WTC11 (cell line): ENCODE measurements at regions of chr2 and their contacts with region 1.

Region 1: DNA sequence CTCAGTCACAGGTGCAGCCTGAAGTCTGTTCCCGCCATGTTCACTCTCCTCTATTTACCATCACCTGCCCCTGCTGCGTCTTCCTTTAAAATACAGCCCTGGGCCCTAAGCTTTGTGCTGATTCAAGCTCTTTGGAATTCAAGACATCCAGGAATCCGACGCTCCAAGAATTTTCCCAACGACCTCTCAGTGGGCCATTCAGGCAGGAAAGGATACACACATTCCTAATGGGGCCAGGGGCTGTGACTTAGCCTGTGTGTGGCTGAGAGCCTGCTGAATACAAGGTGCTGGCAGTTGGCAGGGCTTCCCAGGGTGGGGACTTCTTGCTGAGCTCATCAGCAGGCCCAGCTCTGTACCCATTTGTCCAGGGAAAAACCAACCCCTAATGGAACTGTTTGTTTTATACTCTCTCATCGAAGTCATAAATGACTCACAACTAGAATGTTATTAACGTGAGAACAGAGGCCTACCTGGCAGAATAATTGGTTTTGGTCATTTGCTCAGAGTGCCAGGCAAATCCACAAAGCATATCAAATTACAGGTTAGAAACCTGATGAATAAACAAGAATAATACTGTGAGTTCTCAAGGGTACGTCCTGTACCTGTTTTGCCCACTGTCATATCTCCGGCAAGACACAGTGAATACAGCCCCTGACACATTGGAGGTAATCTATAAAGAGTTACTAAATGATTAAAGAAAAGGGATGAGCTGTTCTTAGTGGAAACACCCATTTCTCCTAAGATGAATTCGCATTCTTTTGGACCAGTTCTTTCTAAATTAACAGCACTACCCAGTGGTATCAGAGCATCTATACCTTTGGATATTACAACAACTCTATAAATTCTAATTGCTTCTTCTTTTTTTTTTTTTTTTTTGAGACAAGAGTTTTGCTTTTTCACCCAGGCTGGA is 12.6 kb upstream of the KCMF1 start:
- DNase-seq: peak; percentile 86
- ATAC-seq: peak; percentile 79
- H3K4me3 Mint-ChIP-seq: peak overlapping the region; percentile 70
- H3K27ac Mint-ChIP-seq: peak overlapping the region; percentile 100
- H3K4me1 Mint-ChIP-seq: peaks cover 73% of the 10 kb centered on the region
- H3K27me3 Mint-ChIP-seq: no peaks in the 10 kb centered on the region
- CTCF ChIP-seq: no peak

Region 2: GRCh38 chr2:84792856-84793522 is 165.4 kb before region 1 on chr2:
- CTCF ChIA-PET with region 1: no interaction called
- POLR2A ChIA-PET with region 1: no interaction called
- DNase-seq: no peak
- ATAC-seq: no peak
- H3K4me3 Mint-ChIP-seq: no peak overlapping the region
- H3K27ac Mint-ChIP-seq: no peak overlapping the region
- H3K4me1 Mint-ChIP-seq: no peaks in the 10 kb centered on the region
- H3K27me3 Mint-ChIP-seq: no peaks in the 10 kb centered on the region; the same call in 1 of the 2 replicates
- CTCF ChIP-seq: no peak

Region 3: GRCh38 chr2:84849271-84849952 is 109.0 kb before region 1 on chr2:
- CTCF ChIA-PET with region 1: no interaction called
- POLR2A ChIA-PET with region 1: no interaction called
- DNase-seq: no peak
- ATAC-seq: no peak
- H3K4me3 Mint-ChIP-seq: no peak overlapping the region
- H3K27ac Mint-ChIP-seq: no peak overlapping the region
- H3K4me1 Mint-ChIP-seq: no peaks in the 10 kb centered on the region
- H3K27me3 Mint-ChIP-seq: peaks cover 17% of the 10 kb centered on the region
- CTCF ChIP-seq: no peak

Region 4: GRCh38 chr2:84939426-84940087 is 18.8 kb before region 1 on chr2:
- CTCF ChIA-PET with region 1: interaction called, 4 read pairs
- POLR2A ChIA-PET with region 1: interaction called, 10 read pairs
- DNase-seq: no peak
- ATAC-seq: peak; percentile 37
- H3K4me3 Mint-ChIP-seq: no peak overlapping the region
- H3K27ac Mint-ChIP-seq: peak overlapping the region; percentile 86; the same call in 1 of the 2 replicates
- H3K4me1 Mint-ChIP-seq: peaks cover 26% of the 10 kb centered on the region
- H3K27me3 Mint-ChIP-seq: no peaks in the 10 kb centered on the region; the same call in 1 of the 2 replicates
- CTCF ChIP-seq: no peak

Region 5: GRCh38 chr2:84946204-84947009 is 12.0 kb before region 1 on chr2:
- CTCF ChIA-PET with region 1: interaction called, 13 read pairs
- POLR2A ChIA-PET with region 1: interaction called, 8 read pairs
- DNase-seq: no peak
- ATAC-seq: peak; percentile 57
- H3K4me3 Mint-ChIP-seq: no peak overlapping the region; the same call in 1 of the 2 replicates
- H3K27ac Mint-ChIP-seq: no peak overlapping the region
- H3K4me1 Mint-ChIP-seq: peaks cover 12% of the 10 kb centered on the region
- H3K27me3 Mint-ChIP-seq: no peaks in the 10 kb centered on the region; the same call in none of the 2 replicates
- CTCF ChIP-seq: no peak

Region 6: GRCh38 chr2:84970868-84971509 is 12.6 kb after region 1 on chr2 and contains the start of gene KCMF1:
- CTCF ChIA-PET with region 1: interaction called, 7 read pairs
- POLR2A ChIA-PET with region 1: interaction called, 90 read pairs
- DNase-seq: peak; percentile 74
- ATAC-seq: peak; percentile 66
- H3K4me3 Mint-ChIP-seq: peak within 1 kb of the TSS; percentile 99
- H3K27ac Mint-ChIP-seq: peak within 1 kb of the TSS; percentile 100
- H3K4me1 Mint-ChIP-seq: peaks cover 55% of the 10 kb centered on the region
- H3K27me3 Mint-ChIP-seq: no peaks in the 10 kb centered on the region
- CTCF ChIP-seq: no peak
- total RNA-seq, gene KCMF1: 114 to 118 TPM (median 117 TPM) in 3 replicates

Region 7: DNA sequence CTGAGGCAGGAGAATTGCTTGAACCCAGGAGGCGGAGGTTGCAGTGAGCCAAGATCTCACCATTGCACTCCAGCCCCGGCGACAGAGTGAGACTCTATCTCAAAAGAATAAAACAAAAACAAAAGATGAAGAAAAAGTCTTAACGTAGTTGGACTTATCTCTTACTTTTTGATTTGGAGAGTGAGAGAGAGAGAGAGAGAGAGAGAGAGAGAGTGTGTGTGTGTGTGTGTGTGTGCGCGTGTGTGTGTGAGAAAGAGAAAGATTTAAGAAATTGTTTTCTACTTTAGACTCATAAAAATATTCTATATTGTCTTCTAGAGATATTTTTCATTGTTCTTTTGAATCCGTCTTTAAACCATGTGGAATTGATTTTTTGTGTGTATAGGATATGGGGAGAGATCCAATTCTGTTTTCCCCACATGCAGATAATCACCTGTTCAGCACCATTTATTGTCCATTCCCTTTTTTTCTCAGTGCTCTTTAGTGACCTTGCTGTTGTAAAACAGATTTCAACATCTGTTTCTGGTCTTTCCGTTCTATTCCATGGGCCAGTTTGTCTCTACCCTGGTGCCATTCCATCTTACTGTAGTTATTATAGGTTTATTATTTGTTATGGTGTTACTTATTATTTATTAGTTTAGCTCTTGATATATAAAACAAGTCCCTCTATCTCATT is 66.1 kb after region 1 on chr2:
- CTCF ChIA-PET with region 1: no interaction called
- POLR2A ChIA-PET with region 1: no interaction called
- DNase-seq: no peak
- ATAC-seq: no peak
- H3K4me3 Mint-ChIP-seq: no peak overlapping the region
- H3K27ac Mint-ChIP-seq: 0 out of 2 replicates have a peak overlapping the region, but pooled peaks have one; percentile 9
- H3K4me1 Mint-ChIP-seq: peaks cover 21% of the 10 kb centered on the region
- H3K27me3 Mint-ChIP-seq: no peaks in the 10 kb centered on the region
- CTCF ChIP-seq: no peak